ENCODE measurements at regions of chr2 and their contacts with region 1.

Region 1: DNA sequence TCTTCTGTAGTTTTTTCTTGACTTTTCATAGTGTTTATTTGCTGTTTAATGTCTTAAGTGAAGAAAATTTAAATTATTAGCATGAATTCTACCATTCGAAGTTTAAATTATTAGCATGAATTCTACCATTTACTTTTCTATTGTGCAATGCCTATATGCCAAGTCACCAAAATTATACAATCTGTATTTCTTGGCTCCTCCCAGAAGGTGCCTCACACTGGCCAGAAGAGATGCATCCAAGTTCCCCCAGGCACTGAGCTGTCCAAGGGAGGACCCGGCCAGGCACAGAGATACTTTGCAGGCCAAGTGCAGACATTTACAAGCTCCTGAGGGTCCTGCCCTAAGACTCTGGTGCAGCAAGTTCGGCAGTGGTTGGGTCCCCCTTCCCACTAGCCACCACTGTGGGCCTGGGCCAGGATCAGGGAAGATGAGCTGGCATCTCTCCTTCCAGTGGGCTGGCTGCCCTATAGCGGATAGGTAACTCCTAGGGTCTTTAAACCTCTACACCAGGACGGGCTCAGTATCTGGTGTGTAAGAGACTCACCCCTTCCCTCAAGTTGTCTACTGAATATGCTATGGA is 31.3 kb downstream of the TMEM247 start:
- DNase-seq: no peak
- ATAC-seq: peak; percentile 52
- H3K4me3 ChIP-seq: no peak overlapping the region
- H3K4me3 Mint-ChIP-seq: no peak overlapping the region
- H3K27ac ChIP-seq: no peak overlapping the region
- H3K27ac Mint-ChIP-seq: no peak overlapping the region
- H3K4me1 ChIP-seq: no peaks in the 10 kb centered on the region
- H3K4me1 Mint-ChIP-seq: peaks cover 0 to 21% (median 14%) of the 10 kb centered on the region in 7 donors
- H3K27me3 ChIP-seq: no peaks in the 10 kb centered on the region
- H3K27me3 Mint-ChIP-seq: peaks cover 0 to 2% (median 0%) of the 10 kb centered on the region in 5 donors

Region 2: DNA sequence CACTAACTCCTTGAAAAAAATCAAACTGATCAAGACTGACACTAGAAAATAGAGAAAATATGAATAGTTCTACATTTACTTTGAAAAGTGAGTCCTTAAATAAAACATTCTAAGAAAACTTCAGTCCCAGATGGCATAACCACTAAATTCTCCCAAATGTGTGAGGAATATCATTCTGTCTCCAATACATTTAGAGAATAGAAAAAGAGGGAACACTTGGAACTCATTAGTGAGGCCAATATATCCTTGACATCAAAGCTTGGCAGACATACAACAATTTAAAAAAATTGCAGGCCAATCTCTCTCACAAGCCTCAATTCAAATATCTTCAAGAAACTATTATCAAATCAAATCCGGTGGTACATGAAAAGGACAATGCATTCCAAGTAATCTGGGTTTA is 110.7 kb before region 1 on chr2:
- CTCF ChIA-PET with region 1: no interaction called
- POLR2A ChIA-PET with region 1: no interaction called
- intact Hi-C with region 1: no loop called
- DNase-seq: no peak
- ATAC-seq: no peak
- H3K4me3 ChIP-seq: no peak overlapping the region
- H3K4me3 Mint-ChIP-seq: no peak overlapping the region
- H3K27ac ChIP-seq: no peak overlapping the region
- H3K27ac Mint-ChIP-seq: no peak overlapping the region
- H3K4me1 ChIP-seq: no peaks in the 10 kb centered on the region
- H3K4me1 Mint-ChIP-seq: peaks cover 0 to 4% (median 0%) of the 10 kb centered on the region in 7 donors
- H3K27me3 ChIP-seq: no peaks in the 10 kb centered on the region
- H3K27me3 Mint-ChIP-seq: peaks cover 0 to 46% (median 4%) of the 10 kb centered on the region in 5 donors

Region 3: DNA sequence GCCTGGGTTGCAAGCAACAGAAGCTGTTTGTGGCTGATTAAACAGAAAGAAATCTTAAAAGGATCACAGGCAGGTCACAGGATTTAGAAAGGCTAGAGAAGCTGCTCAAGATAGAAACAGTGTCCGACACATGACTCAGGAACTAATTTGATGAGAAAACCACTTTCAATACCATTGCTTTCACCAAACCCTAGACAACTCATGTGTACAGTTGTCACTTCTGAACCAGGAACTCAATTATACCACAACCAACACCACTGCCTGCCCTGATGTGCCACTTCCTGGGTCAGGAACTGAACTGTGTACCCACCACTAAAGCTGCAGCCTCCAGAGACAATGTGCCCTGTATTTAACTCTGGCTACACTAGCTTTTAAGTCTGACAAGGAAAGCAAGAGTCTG is 24.7 kb after region 1 on chr2:
- CTCF ChIA-PET with region 1: interaction called, 3 read pairs
- POLR2A ChIA-PET with region 1: no interaction called
- intact Hi-C with region 1: loop called in 1 of 2 experiments (anchors 1 kb)
- DNase-seq: peak in 3 of 9 donors; percentile 20 to 29 (median 21)
- ATAC-seq: peak; percentile 88
- H3K4me3 ChIP-seq: no peak overlapping the region
- H3K4me3 Mint-ChIP-seq: peak overlapping the region; percentile 22 to 82 (median 68)
- H3K27ac ChIP-seq: peak overlapping the region; percentile 54
- H3K27ac Mint-ChIP-seq: peak overlapping the region; percentile 56 to 87 (median 78)
- H3K4me1 ChIP-seq: peaks cover 28 to 36% of the 10 kb centered on the region in 2 donors
- H3K4me1 Mint-ChIP-seq: peaks cover 29 to 62% (median 50%) of the 10 kb centered on the region in 7 donors
- H3K27me3 ChIP-seq: no peaks in the 10 kb centered on the region
- H3K27me3 Mint-ChIP-seq: no peaks in the 10 kb centered on the region